ENCODE measurements at regions of chr3 and their contacts with region 1.

Region 1: DNA sequence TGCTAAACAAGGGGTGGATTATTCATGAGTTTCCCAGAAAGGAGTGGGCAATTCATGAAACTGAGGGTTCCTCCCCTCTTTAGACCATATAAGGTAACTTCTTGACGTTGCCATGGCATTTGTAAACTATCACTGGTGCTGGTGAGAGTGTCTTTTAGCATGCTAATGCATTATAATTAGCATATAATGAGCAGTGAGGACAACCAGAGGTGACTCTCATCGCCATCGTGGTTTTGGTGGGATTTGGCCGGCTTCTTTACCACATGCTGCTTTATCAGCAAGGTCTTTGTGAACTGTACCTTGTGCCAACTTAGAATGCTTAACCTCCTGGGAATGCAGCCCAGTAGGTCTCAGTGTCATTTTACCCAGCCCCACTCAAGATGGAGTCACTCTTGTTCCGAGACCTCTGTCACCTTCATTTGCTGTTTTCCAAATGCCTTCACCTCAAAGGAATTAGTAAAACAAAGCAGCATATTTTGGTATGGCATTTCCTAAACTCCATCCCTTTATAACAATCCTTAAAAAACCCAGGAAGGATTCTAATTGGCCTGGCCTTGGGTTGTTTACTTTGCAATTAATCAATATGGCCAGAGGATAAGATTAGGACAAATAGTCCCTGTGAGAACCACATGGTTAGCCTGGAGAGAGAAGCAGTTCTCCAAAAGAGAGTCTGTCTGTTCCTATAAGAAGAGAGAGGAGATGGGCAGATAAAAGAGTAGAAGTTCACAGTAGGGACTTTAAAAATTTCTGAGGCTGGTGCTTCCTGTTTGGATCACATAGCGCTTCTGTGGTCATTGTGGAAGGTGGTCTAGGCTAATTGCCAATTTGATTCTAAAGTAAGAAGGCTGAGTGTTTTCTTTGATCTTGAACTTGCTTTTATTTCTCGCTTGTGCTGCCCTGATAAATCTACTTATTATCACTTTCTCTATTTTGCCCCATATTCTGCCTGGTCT is 155.2 kb upstream of the EOMES start:
- DNase-seq: no peak
- ATAC-seq: no peak
- H3K4me3 ChIP-seq: no peak overlapping the region
- H3K27ac ChIP-seq: no peak overlapping the region
- H3K4me1 ChIP-seq: no peaks in the 10 kb centered on the region
- H3K27me3 ChIP-seq: no peaks in the 10 kb centered on the region
- CTCF ChIP-seq: no peak
- EP300 ChIP-seq: no peak
- POLR2A ChIP-seq: no peak
- RAD21 ChIP-seq: no peak

Region 2: DNA sequence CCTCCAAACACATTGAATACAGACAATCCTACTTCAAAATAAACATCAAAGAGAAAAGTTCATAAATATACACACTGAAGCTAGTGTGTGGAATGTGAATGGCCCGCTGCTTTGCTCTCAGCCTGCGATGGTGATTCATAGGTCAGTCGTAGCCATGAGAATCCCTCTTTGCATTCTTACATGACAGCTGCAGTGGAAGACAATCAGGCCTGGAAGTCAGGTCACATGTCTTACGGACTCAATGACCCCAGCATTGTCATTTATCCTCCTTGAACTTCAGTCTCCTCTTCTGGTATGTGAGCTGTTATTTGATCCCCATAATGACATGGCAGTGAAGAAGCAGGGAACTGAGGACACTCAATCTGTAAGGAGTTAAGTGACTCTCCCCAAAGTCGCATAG is 62.6 kb after region 1 on chr3:
- CTCF ChIA-PET with region 1: no interaction called
- POLR2A ChIA-PET with region 1: no interaction called
- in situ Hi-C with region 1: no loop called
- intact Hi-C with region 1: loop called (anchors 10 kb)
- DNase-seq: no peak
- ATAC-seq: no peak
- H3K4me3 ChIP-seq: no peak overlapping the region
- H3K27ac ChIP-seq: no peak overlapping the region
- H3K4me1 ChIP-seq: no peaks in the 10 kb centered on the region
- H3K27me3 ChIP-seq: no peaks in the 10 kb centered on the region
- CTCF ChIP-seq: no peak
- EP300 ChIP-seq: no peak
- POLR2A ChIP-seq: no peak
- RAD21 ChIP-seq: no peak